Activated CD4-positive, alpha-beta memory T cell treated with anti-CD3 and anti-CD28 coated beads for 36 hours (primary cell): ENCODE measurements at regions of chr4 and their contacts with region 1.

Region 1: GRCh38 chr4:142567199-142567598 is 278.9 kb downstream of the INPP4B start:
- DNase-seq: peak; percentile 75
- H3K4me3 Mint-ChIP-seq: peak overlapping the region; percentile 79
- H3K27ac Mint-ChIP-seq: peak overlapping the region; percentile 94
- H3K4me1 Mint-ChIP-seq: peaks cover 52% of the 10 kb centered on the region
- H3K27me3 Mint-ChIP-seq: no peaks in the 10 kb centered on the region

Region 2: DNA sequence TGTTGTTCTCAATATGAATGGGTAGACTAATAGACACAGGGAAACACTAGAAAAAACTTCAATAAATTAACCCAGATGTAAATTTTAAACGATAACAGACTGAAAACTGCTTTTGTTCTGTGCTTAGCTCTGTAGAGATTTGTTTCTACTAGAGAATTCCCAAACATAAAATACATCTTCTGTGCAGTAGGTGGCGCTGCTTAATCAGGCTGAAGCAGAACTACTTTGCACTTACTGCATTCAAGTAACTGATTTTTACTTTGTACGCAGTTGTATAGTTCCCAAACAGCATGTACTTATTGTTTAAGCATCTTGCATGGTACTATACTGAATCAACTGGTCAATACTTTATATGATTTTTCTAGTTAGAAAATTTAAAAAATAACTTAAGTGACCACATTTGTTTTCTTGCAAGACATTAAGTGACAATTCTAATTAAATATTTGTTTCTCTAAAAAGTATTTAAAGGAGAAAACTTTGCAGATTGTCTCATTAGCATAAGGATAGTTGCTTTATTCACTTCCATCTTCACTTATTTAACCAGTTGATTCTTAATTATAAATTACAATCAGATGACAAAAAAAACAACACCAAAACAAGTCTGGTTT is 440.2 kb before region 1 on chr4:
- CTCF ChIA-PET with region 1: no interaction called
- POLR2A ChIA-PET with region 1: no interaction called
- intact Hi-C with region 1: loop called (anchors 5 kb)
- DNase-seq: peak; percentile 68
- H3K4me3 Mint-ChIP-seq: no peak overlapping the region
- H3K27ac Mint-ChIP-seq: no peak overlapping the region
- H3K4me1 Mint-ChIP-seq: peaks cover 26% of the 10 kb centered on the region
- H3K27me3 Mint-ChIP-seq: no peaks in the 10 kb centered on the region

Region 3: GRCh38 chr4:142353149-142353738 is 214.0 kb before region 1 on chr4:
- CTCF ChIA-PET with region 1: interaction called, 20 read pairs
- POLR2A ChIA-PET with region 1: interaction called, 13 read pairs
- intact Hi-C with region 1: loop called (anchors 1 kb)
- DNase-seq: no peak
- H3K4me3 Mint-ChIP-seq: peak overlapping the region; percentile 55
- H3K27ac Mint-ChIP-seq: peak overlapping the region; percentile 87
- H3K4me1 Mint-ChIP-seq: peaks cover 95% of the 10 kb centered on the region
- H3K27me3 Mint-ChIP-seq: no peaks in the 10 kb centered on the region

Region 4: GRCh38 chr4:142405021-142405694 is 162.0 kb before region 1 on chr4:
- CTCF ChIA-PET with region 1: interaction called, 21 read pairs
- POLR2A ChIA-PET with region 1: interaction called, 116 read pairs
- intact Hi-C with region 1: loop called (anchors 1 kb)
- DNase-seq: peak; percentile 77
- H3K4me3 Mint-ChIP-seq: peak overlapping the region; percentile 92
- H3K27ac Mint-ChIP-seq: peak overlapping the region; percentile 97
- H3K4me1 Mint-ChIP-seq: peaks cover 40% of the 10 kb centered on the region
- H3K27me3 Mint-ChIP-seq: no peaks in the 10 kb centered on the region

Region 5: GRCh38 chr4:142713282-142714030 is 146.3 kb after region 1 on chr4:
- CTCF ChIA-PET with region 1: no interaction called
- POLR2A ChIA-PET with region 1: no interaction called
- intact Hi-C with region 1: loop called (anchors 1 kb)
- DNase-seq: no peak
- H3K4me3 Mint-ChIP-seq: peak overlapping the region; percentile 17
- H3K27ac Mint-ChIP-seq: peak overlapping the region; percentile 87
- H3K4me1 Mint-ChIP-seq: peaks cover 61% of the 10 kb centered on the region
- H3K27me3 Mint-ChIP-seq: no peaks in the 10 kb centered on the region

Region 6: DNA sequence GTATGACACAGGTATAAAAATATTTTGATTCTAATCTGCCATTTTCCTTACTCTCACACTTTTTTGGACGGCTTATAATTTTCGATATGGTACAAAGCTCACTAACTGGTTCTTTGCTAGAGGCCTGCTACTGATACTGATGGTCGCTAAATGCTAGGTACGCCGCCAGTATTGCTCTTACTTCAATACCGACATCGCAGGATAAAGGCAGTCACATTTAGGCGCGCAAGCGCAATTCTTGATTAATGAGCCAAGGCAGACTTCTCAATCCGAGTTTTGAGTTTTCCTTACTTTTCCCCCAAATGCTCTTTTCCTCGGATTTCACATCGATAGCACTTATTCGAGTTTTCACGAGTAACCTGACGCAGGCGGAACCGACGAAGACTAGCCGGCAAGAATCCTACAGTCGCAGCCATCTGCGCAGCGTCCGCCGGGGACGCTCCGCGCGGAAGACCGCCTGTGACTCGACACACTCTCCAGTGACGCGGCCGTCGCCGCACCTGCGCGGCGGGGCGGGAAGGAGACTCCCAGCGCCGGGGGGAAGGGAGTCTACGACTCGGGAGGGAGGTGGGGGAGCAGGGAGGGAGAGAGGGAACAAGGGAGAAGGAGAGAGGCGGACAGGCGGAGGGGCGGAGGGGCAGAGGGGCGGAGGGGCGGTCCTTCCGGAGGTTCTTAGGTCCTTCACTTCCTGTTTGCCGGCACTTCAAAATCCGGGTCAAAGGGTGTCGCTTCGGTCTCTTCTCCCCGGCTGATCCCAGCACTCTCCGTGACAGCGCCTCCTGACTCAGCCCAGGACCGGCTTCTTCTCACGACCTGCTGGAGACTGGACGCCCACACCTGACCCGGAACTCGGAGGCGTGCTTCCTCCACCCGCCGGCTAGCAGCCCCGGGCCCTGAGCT is 617.3 kb after region 1 on chr4 and contains the start of gene USP38:
- CTCF ChIA-PET with region 1: no interaction called
- POLR2A ChIA-PET with region 1: no interaction called
- intact Hi-C with region 1: loop called (anchors 2 kb)
- DNase-seq: peak; percentile 96
- H3K4me3 Mint-ChIP-seq: peak within 1 kb of the TSS; percentile 87
- H3K27ac Mint-ChIP-seq: peak within 1 kb of the TSS; percentile 94
- H3K4me1 Mint-ChIP-seq: peaks cover 28% of the 10 kb centered on the region
- H3K27me3 Mint-ChIP-seq: no peaks in the 10 kb centered on the region
- total RNA-seq, gene USP38: 21.7 to 22.0 TPM